Caco-2 (cell line): ENCODE measurements at regions of chr10 and their contacts with region 1.

Region 1: DNA sequence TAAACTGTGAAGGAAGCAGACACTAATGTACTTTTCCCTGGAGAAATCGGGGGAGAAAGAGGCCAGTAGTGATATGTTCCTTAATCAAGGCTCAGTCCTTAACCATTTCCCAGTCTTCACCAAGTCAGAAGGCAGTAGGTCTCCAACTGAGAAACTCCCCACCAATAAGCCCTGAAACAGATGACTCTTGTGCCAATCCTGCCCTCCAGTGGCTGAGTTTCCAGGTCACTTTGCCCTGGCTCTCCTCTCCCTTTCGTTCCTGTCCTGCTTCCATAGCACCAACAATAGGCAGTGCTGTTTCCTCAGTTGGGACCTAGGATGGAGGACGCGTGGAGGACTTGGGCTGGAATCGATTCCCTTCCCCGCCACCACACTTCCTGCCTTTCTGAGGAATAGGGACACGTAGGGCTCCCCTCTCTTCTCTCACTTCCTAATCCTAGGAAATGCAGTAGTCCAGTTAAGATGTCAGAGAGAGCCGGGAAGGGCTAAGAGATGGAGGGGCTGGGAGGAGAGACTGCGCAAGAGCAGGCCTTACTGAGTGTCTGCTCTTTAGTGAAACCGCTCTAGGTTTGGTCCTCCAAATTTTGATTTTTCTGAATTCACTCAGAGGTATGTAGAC is 23.4 kb downstream of the ATOH7 start:
- DNase-seq: peak; percentile 83 to 87
- H3K4me3 ChIP-seq: no peak overlapping the region
- H3K4me3 Mint-ChIP-seq: no peak overlapping the region
- H3K27ac Mint-ChIP-seq: no peak overlapping the region
- H3K4me1 ChIP-seq: no peaks in the 10 kb centered on the region
- H3K4me1 Mint-ChIP-seq: no peaks in the 10 kb centered on the region
- H3K27me3 ChIP-seq: no peaks in the 10 kb centered on the region; the same call in 1 of the 2 replicates
- H3K27me3 Mint-ChIP-seq: peaks cover 16% of the 10 kb centered on the region
- CTCF ChIP-seq: peak; percentile 82 to 92

Region 2: DNA sequence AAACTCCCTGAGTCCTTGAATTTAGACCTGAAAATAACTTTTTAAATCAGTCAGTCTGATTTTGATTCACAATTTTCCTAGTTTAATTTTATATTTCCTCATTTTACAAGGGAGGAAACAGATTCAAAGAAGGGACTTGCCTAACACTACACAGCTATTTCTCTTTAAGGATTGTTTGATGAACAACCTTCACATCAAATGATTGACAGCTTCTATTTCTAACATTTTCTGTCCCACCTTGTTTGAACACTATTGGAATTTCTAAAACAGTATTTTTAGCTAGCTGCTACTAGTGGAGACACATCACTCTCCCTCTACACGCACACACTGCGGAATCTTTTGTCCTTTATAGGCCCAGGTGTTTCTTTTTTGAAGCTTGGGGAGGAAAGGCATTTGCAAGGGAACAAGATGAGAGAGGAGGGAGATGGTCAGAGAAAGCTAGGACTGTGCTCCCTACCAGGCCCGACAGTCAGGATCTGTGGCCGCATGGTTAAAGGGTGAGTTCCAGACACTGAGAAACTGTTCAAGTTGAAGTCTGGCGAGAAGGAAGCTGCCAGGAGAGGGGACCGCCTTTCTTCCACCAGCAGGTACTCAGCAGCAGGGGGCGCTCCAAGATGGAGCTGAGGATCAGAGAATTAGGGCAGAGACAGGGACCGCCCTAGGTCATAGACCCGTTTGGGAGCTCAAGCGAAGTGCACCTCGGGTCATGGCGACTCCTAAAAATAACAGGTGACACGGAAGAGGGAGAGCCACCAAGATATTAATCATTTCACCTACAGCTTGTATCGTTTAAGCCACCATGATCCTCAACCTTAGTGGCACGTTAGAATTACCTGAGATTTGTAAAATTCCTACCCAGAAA is 420.3 kb before region 1 on chr10:
- CTCF ChIA-PET with region 1: no interaction called
- POLR2A ChIA-PET with region 1: no interaction called
- intact Hi-C with region 1: loop called (anchors 2 kb)
- DNase-seq: peak; percentile 61 to 69
- H3K4me3 ChIP-seq: no peak overlapping the region
- H3K4me3 Mint-ChIP-seq: no peak overlapping the region
- H3K27ac Mint-ChIP-seq: peak overlapping the region; percentile 18
- H3K4me1 ChIP-seq: no peaks in the 10 kb centered on the region
- H3K4me1 Mint-ChIP-seq: peaks cover 13% of the 10 kb centered on the region
- H3K27me3 ChIP-seq: no peaks in the 10 kb centered on the region
- H3K27me3 Mint-ChIP-seq: no peaks in the 10 kb centered on the region
- CTCF ChIP-seq: peak; percentile 57 to 80

Region 3: GRCh38 chr10:68082872-68083271 is 125.7 kb before region 1 on chr10:
- CTCF ChIA-PET with region 1: interaction called, 3 read pairs
- POLR2A ChIA-PET with region 1: no interaction called
- intact Hi-C with region 1: loop called (anchors 1 kb)
- DNase-seq: peak in 1 of 2 experiments; percentile 26
- H3K4me3 ChIP-seq: no peak overlapping the region
- H3K4me3 Mint-ChIP-seq: no peak overlapping the region
- H3K27ac Mint-ChIP-seq: no peak overlapping the region
- H3K4me1 ChIP-seq: peaks cover 15% of the 10 kb centered on the region
- H3K4me1 Mint-ChIP-seq: peaks cover 19% of the 10 kb centered on the region
- H3K27me3 ChIP-seq: no peaks in the 10 kb centered on the region
- H3K27me3 Mint-ChIP-seq: peaks cover 3% of the 10 kb centered on the region
- CTCF ChIP-seq: peak; percentile 45 to 54

Region 4: DNA sequence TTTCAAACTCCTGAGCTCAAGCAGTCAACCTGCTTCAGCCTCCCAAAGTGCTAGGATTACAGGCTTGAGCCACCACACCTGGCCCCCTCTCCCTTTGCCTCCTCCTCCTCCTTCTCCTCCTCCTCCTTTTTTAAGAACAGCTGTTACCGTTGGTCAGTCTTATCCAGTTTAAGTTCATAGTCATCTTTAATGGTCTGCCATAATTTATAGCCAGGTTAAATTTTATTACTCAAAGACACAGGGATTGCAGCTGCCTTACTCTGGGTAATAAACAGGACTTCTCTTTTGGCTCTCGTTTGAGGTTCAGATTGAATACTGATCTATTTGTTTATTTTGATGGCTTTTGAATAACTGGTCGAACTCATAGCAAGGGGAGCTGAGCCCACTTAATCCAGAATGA is 11.8 kb before region 1 on chr10:
- CTCF ChIA-PET with region 1: interaction called, 10 read pairs
- POLR2A ChIA-PET with region 1: no interaction called
- intact Hi-C with region 1: no loop called
- DNase-seq: no peak
- H3K4me3 ChIP-seq: no peak overlapping the region
- H3K4me3 Mint-ChIP-seq: no peak overlapping the region
- H3K27ac Mint-ChIP-seq: no peak overlapping the region
- H3K4me1 ChIP-seq: no peaks in the 10 kb centered on the region
- H3K4me1 Mint-ChIP-seq: no peaks in the 10 kb centered on the region
- H3K27me3 ChIP-seq: no peaks in the 10 kb centered on the region
- H3K27me3 Mint-ChIP-seq: peaks cover 41% of the 10 kb centered on the region
- CTCF ChIP-seq: no peak

Region 5: GRCh38 chr10:68231106-68231816 is 22.7 kb after region 1 on chr10:
- CTCF ChIA-PET with region 1: interaction called, 31 read pairs
- POLR2A ChIA-PET with region 1: interaction called, 5 read pairs
- intact Hi-C with region 1: no loop called
- DNase-seq: peak; percentile 89 to 94
- H3K4me3 ChIP-seq: peak overlapping the region; percentile 86
- H3K4me3 Mint-ChIP-seq: peak overlapping the region; percentile 87
- H3K27ac Mint-ChIP-seq: peak overlapping the region; percentile 72
- H3K4me1 ChIP-seq: 0 out of 2 replicates have a peak, but pooled peaks cover 5% of the 10 kb centered on the region
- H3K4me1 Mint-ChIP-seq: peaks cover 7% of the 10 kb centered on the region
- H3K27me3 ChIP-seq: no peaks in the 10 kb centered on the region
- H3K27me3 Mint-ChIP-seq: peaks cover 5% of the 10 kb centered on the region
- CTCF ChIP-seq: peak in 1 of 2 experiments; percentile 52

Region 6: GRCh38 chr10:68331455-68332258 is 123.1 kb after region 1 on chr10 and contains the start of gene HNRNPH3:
- CTCF ChIA-PET with region 1: interaction called, 35 read pairs
- POLR2A ChIA-PET with region 1: interaction called, 14 read pairs
- intact Hi-C with region 1: loop called (anchors 1 kb)
- DNase-seq: peak; percentile 99 to 100
- H3K4me3 ChIP-seq: peak within 1 kb of the TSS; percentile 68
- H3K4me3 Mint-ChIP-seq: peak within 1 kb of the TSS; percentile 87
- H3K27ac Mint-ChIP-seq: peak within 1 kb of the TSS; percentile 100
- H3K4me1 ChIP-seq: peaks cover 21% of the 10 kb centered on the region
- H3K4me1 Mint-ChIP-seq: peaks cover 45% of the 10 kb centered on the region
- H3K27me3 ChIP-seq: no peaks in the 10 kb centered on the region
- H3K27me3 Mint-ChIP-seq: no peaks in the 10 kb centered on the region
- CTCF ChIP-seq: peak in 1 of 2 experiments; percentile 1
- total RNA-seq, gene HNRNPH3: 262 and 283 TPM in 2 replicates

Region 7: DNA sequence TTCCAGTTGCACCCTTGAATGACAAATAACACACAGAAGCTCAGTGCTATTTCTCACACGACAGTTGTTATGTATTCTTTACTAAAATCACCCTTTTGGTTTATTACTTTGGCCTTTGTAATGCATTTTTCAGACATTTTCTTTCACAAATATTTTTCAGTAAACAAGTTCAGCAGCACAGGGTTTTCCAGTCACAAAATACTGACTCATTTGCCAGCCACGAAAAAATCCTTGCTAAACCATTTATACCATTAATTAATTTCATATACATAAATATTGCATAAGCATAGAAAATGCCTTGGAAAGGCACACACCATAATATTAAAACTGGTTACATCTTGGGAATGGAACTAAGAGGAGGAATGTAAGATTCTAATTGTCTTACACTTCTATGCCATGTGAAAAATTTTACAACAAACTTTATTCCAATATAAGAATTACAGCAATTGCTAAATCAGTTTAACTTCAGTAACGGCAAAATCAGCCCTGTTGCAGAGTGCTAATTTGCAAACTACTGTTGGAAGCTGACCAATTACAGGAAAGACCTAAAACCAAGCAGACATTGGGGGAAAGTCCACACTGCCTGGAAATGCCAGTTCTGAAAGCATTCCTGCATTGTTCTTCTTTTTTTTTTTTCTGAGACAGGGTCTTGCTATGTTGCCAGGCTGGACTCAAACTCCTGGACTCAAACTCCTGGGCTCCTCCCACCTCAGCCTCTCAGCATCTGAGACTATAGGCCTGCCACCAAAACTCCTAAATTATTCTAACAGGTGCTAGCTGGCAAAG is 155.8 kb after region 1 on chr10:
- CTCF ChIA-PET with region 1: no interaction called
- POLR2A ChIA-PET with region 1: no interaction called
- intact Hi-C with region 1: no loop called
- DNase-seq: no peak
- H3K4me3 ChIP-seq: no peak overlapping the region
- H3K4me3 Mint-ChIP-seq: no peak overlapping the region
- H3K27ac Mint-ChIP-seq: no peak overlapping the region
- H3K4me1 ChIP-seq: no peaks in the 10 kb centered on the region
- H3K4me1 Mint-ChIP-seq: no peaks in the 10 kb centered on the region
- H3K27me3 ChIP-seq: no peaks in the 10 kb centered on the region
- H3K27me3 Mint-ChIP-seq: no peaks in the 10 kb centered on the region
- CTCF ChIP-seq: no peak

Region 8: DNA sequence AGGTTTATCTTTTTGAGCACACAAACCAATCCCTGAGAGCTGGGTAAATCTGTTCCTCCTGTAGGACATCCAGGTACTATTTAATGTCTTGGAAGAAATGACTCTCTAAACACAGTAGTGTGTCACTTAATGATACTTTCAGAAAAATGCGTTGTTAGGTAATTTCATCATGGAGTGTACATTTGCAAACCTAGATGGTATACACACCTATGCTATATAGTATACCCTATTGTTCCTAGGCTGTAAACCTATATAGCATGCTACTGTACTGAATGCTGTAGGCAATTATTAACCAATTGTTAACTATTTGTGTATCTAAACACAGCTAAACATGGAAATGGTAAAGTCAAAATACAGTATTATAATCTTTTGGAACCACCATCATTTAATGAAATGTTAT is 188.5 kb after region 1 on chr10:
- CTCF ChIA-PET with region 1: no interaction called
- POLR2A ChIA-PET with region 1: no interaction called
- intact Hi-C with region 1: no loop called
- DNase-seq: no peak
- H3K4me3 ChIP-seq: no peak overlapping the region
- H3K4me3 Mint-ChIP-seq: no peak overlapping the region
- H3K27ac Mint-ChIP-seq: no peak overlapping the region
- H3K4me1 ChIP-seq: no peaks in the 10 kb centered on the region
- H3K4me1 Mint-ChIP-seq: no peaks in the 10 kb centered on the region
- H3K27me3 ChIP-seq: no peaks in the 10 kb centered on the region
- H3K27me3 Mint-ChIP-seq: no peaks in the 10 kb centered on the region
- CTCF ChIP-seq: no peak

Region 9: DNA sequence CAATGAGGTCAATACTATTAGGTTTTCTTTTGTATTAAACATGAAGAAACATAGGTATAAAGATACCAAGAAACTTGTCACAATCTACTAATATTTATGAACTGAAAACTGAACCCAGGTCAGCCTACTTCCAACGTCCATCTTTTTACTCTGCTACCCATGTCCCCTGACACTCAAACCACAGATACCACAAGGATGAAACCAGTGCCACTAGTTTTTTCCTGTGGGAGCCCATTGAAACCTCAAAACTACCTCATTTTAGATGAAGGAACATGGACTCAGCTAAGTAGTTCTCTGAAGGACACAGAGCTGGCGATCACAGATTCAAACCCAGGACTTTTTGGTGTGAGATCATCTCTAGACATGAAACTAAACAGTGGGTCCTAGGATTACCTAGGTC is 358.4 kb after region 1 on chr10:
- CTCF ChIA-PET with region 1: no interaction called
- POLR2A ChIA-PET with region 1: no interaction called
- intact Hi-C with region 1: no loop called
- DNase-seq: no peak
- H3K4me3 ChIP-seq: no peak overlapping the region
- H3K4me3 Mint-ChIP-seq: no peak overlapping the region
- H3K27ac Mint-ChIP-seq: no peak overlapping the region
- H3K4me1 ChIP-seq: peaks cover 3% of the 10 kb centered on the region; the same call in 1 of the 2 replicates
- H3K4me1 Mint-ChIP-seq: peaks cover 18% of the 10 kb centered on the region
- H3K27me3 ChIP-seq: no peaks in the 10 kb centered on the region
- H3K27me3 Mint-ChIP-seq: no peaks in the 10 kb centered on the region
- CTCF ChIP-seq: no peak

Region 10: DNA sequence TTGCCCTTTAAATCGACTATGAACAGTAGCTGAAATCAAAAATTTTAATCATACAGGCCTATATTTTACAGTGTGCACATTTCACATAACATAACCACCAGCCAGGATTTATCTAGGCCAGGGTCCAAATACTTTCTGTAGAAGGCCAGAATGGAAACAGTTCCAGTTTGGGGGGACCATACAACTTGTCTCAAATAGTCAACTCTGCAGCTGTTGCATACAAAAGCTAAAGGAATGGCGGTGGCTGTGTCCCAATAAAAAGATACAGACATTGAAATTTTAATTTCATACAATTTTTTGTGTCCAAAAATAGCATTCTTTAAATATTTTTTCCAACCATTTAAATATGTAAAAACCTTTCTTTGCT is 1938.7 kb after region 1 on chr10:
- CTCF ChIA-PET with region 1: no interaction called
- POLR2A ChIA-PET with region 1: no interaction called
- intact Hi-C with region 1: no loop called
- DNase-seq: no peak
- H3K4me3 ChIP-seq: peak overlapping the region; percentile 74
- H3K4me3 Mint-ChIP-seq: peak overlapping the region; percentile 98
- H3K27ac Mint-ChIP-seq: peak overlapping the region; percentile 68
- H3K4me1 ChIP-seq: peaks cover 15% of the 10 kb centered on the region; the same call in 1 of the 2 replicates
- H3K4me1 Mint-ChIP-seq: peaks cover 8% of the 10 kb centered on the region
- H3K27me3 ChIP-seq: no peaks in the 10 kb centered on the region
- H3K27me3 Mint-ChIP-seq: no peaks in the 10 kb centered on the region
- CTCF ChIP-seq: peak in 1 of 2 experiments; percentile 0